Pancreas (tissue), 10 donors: ENCODE measurements at regions of chr10 and their contacts with region 1.

Region 1: GRCh38 chr10:80205478-80206276 is at the start of gene ANXA11:
- DNase-seq: peak; percentile 83 to 95 (median 90)
- ATAC-seq: peak; percentile 81 to 89 (median 85)
- H3K4me3 ChIP-seq: peak within 1 kb of the TSS; percentile 60 to 94 (median 86)
- H3K27ac ChIP-seq: peak within 1 kb of the TSS; percentile 96 to 99 (median 98)
- H3K4me1 ChIP-seq: peaks cover 18 to 35% (median 23%) of the 10 kb centered on the region in 3 donors
- H3K27me3 ChIP-seq: no peaks in the 10 kb centered on the region
- CTCF ChIP-seq: no peak
- total RNA-seq, gene ANXA11: 74.0 to 140 (median 91.8) TPM

Region 2: DNA sequence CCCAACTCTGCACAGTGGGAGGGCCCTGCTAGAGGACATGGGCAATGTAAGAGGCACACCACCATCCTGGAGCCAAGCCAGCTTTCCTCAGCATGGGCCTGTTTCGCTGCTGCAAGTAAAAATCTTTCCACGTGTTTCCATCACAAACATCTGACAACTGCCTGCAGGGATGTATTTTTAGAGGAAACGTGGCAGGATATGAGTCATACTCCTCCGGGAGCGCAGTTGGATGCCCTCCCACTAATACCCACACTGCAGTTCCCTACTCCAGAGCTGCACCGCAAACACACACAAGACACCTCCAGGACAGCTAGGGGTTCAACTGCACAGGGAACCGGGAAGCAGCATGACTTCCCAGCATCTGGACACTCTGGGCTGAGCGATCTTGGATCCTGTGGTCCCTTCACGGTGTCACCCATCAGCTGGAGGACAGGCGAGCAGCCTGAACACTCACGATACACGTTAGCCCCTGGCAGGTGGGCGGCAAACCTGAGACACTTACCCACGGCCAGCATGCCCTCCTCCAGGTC is 47.0 kb before region 1 on chr10:
- intact Hi-C with region 1: loop called in 1 of 3 experiments (anchors 10 kb)
- DNase-seq: peak in 2 of 6 donors; percentile 24 to 64
- ATAC-seq: peak; percentile 36 to 87 (median 70)
- H3K4me3 ChIP-seq: no peak overlapping the region
- H3K27ac ChIP-seq: peak overlapping the region in 2 of 4 donors; percentile 39 to 66
- H3K4me1 ChIP-seq: no peaks in the 10 kb centered on the region
- H3K27me3 ChIP-seq: no peaks in the 10 kb centered on the region
- CTCF ChIP-seq: no peak